ENCODE measurements at regions of chr12 and their contacts with region 1.

Region 1: GRCh38 chr12:32671930-32672780 is 6.9 kb upstream of the DNM1L start:
- DNase-seq: no peak
- H3K4me3 ChIP-seq: no peak overlapping the region
- H3K27ac ChIP-seq: no peak overlapping the region
- H3K4me1 ChIP-seq: peaks cover 0 to 11% (median 5%) of the 10 kb centered on the region in 4 donors
- H3K27me3 ChIP-seq: no peaks in the 10 kb centered on the region
- CTCF ChIP-seq: peak; percentile 41 to 58 (median 53)
- EP300 ChIP-seq: no peak
- POLR2A ChIP-seq: no peak

Region 2: GRCh38 chr12:32365473-32366064 is 306.6 kb before region 1 on chr12:
- intact Hi-C with region 1: loop called (anchors 5 kb)
- DNase-seq: no peak
- H3K4me3 ChIP-seq: no peak overlapping the region
- H3K27ac ChIP-seq: no peak overlapping the region
- H3K4me1 ChIP-seq: no peaks in the 10 kb centered on the region
- H3K27me3 ChIP-seq: no peaks in the 10 kb centered on the region
- CTCF ChIP-seq: peak; percentile 64 to 81 (median 73)
- EP300 ChIP-seq: no peak
- POLR2A ChIP-seq: no peak

Measured in esophagus muscularis mucosa (tissue), 4 donors.